ENCODE measurements at regions of chr19 and their contacts with region 1.

Region 1: DNA sequence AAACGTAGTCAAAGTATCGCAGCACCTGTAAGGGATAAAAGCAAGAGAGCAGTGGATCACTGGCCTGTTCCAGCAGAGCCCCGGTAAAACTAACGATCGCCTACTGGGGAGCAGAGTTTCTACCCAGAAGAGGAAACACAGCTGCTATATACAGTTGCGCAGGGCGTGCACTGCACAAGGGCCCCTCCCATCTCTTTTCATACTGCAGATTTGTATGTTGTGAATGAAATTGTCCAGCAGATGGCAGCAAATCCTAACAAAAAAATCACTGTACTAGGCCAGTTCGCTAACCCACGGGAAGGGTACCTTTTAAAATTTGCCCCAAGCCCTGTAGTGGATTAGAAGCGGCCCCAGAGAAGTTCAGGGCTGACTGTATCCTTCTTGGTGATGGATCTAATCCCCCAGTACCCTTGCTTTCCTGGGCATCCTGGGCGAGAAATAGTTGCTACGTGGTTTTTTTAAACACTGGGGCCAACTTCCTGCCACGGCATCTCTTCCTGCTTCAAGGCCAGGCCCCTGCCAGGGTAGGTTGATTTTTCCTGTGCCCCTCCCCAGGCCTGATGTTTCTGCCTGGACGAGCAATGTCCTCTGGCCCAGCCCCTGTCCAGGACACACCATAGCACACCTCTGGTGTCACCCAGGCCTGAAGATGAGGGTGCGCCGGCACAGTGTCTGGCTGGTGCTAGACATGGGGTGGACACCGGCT is 127.0 kb downstream of the IER2 start:
- DNase-seq: no peak
- ATAC-seq: peak; percentile 93

Region 2: GRCh38 chr19:13132471-13133180 is 144.6 kb before region 1 on chr19:
- intact Hi-C with region 1: no loop called
- DNase-seq: no peak
- ATAC-seq: no peak

Region 3: GRCh38 chr19:13588957-13589833 is 311.9 kb after region 1 on chr19:
- intact Hi-C with region 1: loop called (anchors 5 kb)
- DNase-seq: peak; percentile 81
- ATAC-seq: peak; percentile 81